Mammary epithelial cell (primary cell): ENCODE measurements at regions of chr12 and their contacts with region 1.

Region 1: DNA sequence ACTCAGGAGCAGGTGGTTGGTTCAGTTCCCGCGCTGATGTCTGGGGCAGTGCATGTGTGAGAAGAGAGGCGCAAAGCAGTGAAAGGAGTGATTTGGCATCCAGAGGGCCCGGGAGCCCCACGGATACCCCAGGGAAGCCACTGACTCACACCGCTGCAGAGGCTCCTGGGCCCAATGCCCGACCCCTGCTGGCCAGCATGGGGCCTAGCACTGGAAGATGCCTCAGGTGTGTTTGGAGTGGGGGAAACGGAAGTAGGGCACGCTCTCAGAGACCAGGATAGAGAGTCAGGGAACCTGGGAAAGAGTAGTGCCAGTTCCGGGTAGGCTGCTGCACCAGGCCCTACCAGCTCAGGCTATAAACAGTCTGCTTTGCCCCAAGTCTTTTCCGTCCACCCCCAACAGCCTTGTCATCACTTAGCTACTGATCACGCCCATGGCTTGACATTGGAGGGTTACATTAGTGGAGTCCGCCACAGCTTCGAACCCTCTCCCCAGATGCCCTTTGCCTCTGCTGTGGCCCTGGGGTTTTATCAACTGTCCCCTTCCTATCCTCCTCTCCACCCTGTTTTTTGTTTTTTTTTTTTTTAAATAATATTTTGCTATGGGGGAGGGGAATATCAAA is 9.5 kb upstream of the CSAD start:
- DNase-seq: peak; percentile 28
- H3K4me3 ChIP-seq: no peak overlapping the region
- H3K27ac ChIP-seq: no peak overlapping the region
- H3K4me1 ChIP-seq: peaks cover 5% of the 10 kb centered on the region
- H3K27me3 ChIP-seq: no peaks in the 10 kb centered on the region
- CTCF ChIP-seq: peak; percentile 89 to 93

Region 2: DNA sequence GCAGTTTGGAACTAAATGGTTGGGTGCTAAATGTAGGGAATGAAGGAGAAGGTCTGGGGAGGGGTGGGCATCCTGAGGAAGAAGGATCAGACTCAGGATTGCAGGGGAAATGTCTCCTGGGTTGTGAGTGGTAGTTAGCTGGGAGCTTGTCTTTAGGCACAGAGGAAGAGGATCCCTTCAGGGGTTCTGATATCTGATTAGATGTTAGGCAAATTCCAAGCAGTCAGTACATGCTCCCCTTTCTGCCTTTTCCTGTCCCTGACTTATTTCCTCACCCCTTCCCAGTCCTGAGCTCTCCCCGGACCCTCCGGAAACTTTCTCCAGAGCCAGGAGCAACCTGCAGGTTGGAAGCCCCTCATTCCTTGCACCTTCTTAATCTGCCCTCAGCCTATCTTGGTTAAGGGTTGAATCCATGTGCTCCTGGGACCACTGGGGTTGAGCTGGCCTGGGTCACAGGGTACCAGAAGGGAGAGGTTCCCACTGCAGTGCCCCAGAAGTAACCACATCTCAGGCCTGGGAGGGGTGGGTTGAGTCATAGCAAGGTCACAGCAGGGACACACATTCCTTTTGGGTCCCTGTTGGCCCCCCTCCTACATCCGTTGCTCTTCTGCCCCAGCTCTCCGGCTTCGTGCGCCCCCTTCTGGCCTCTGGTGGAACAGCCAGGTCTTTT is 91.1 kb before region 1 on chr12:
- CTCF ChIA-PET with region 1: no interaction called
- dilution Hi-C with region 1: loop called (anchors 5 kb)
- in situ Hi-C with region 1: no loop called
- intact Hi-C with region 1: no loop called
- DNase-seq: peak; percentile 86
- H3K4me3 ChIP-seq: peak overlapping the region; percentile 61 to 83 (median 79)
- H3K27ac ChIP-seq: peak overlapping the region; percentile 66
- H3K4me1 ChIP-seq: peaks cover 33% of the 10 kb centered on the region
- H3K27me3 ChIP-seq: no peaks in the 10 kb centered on the region
- CTCF ChIP-seq: peak; percentile 88 to 95

Region 3: DNA sequence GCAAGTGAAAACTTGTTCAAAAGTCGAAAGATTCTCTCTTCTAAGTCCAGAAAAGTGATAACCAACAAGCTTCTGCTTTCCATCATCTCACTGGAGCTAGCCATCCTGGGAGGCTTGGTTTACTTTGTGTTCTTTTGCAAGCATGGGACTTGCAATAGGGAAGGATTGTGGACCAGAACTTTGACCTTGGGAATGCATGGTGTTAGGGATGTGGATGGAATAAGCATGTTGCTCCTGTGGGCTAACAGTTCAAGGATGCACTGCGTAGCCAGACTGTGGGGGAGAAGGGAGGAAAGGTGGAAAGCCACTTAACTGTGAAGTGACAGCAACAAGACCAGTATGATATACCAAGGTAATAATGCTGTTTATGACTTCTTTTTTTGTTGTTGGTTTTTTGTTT is 58.4 kb before region 1 on chr12:
- CTCF ChIA-PET with region 1: no interaction called
- dilution Hi-C with region 1: loop called (anchors 5 kb)
- in situ Hi-C with region 1: no loop called
- intact Hi-C with region 1: no loop called
- DNase-seq: no peak
- H3K4me3 ChIP-seq: no peak overlapping the region
- H3K27ac ChIP-seq: no peak overlapping the region
- H3K4me1 ChIP-seq: no peaks in the 10 kb centered on the region
- H3K27me3 ChIP-seq: no peaks in the 10 kb centered on the region
- CTCF ChIP-seq: no peak

Region 4: GRCh38 chr12:53241623-53242412 is 51.6 kb after region 1 on chr12:
- CTCF ChIA-PET with region 1: no interaction called
- dilution Hi-C with region 1: loop called (anchors 10 kb)
- in situ Hi-C with region 1: no loop called
- intact Hi-C with region 1: no loop called
- DNase-seq: no peak
- H3K4me3 ChIP-seq: no peak overlapping the region
- H3K27ac ChIP-seq: no peak overlapping the region
- H3K4me1 ChIP-seq: peaks cover under 1% of the 10 kb centered on the region
- H3K27me3 ChIP-seq: no peaks in the 10 kb centered on the region
- CTCF ChIP-seq: no peak

Region 5: GRCh38 chr12:53267999-53268647 is 77.9 kb after region 1 on chr12 and contains the start of gene ESPL1:
- CTCF ChIA-PET with region 1: no interaction called
- dilution Hi-C with region 1: loop called (anchors 5 kb)
- in situ Hi-C with region 1: no loop called
- intact Hi-C with region 1: no loop called
- DNase-seq: peak; percentile 83
- H3K4me3 ChIP-seq: peak within 1 kb of the TSS; percentile 88 to 98 (median 96)
- H3K27ac ChIP-seq: peak within 1 kb of the TSS; percentile 91
- H3K4me1 ChIP-seq: peaks cover 18% of the 10 kb centered on the region
- H3K27me3 ChIP-seq: no peaks in the 10 kb centered on the region
- CTCF ChIP-seq: peak; percentile 13 to 15
- total RNA-seq, gene ESPL1: 0.67 to 19.7 TPM

Region 6: DNA sequence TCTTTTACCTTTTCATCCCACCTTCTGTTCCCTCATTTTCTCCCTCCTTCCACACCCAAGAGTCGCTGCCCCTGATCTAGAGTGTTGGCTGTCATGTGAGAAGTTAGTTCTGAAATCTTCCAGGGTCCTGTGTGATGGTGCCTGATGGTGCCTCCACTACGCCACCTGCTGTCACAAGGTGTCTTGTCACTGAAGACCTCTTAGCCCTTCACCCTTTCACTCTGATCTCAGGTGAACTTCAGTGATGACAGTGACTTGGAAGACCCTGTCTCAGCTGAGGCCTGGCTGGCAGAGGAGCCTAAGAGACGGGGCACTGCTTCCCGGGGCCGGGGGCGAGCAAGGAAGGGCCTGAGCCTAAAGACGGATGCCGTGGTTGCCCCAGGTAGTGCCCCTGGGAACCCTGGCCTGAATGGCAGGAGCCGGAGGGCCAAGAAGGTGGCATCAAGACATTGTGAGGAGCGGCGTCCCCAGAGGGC is 97.6 kb after region 1 on chr12:
- CTCF ChIA-PET with region 1: no interaction called
- dilution Hi-C with region 1: loop called (anchors 5 kb)
- in situ Hi-C with region 1: no loop called
- intact Hi-C with region 1: no loop called
- DNase-seq: peak; percentile 43
- H3K4me3 ChIP-seq: no peak overlapping the region
- H3K27ac ChIP-seq: no peak overlapping the region
- H3K4me1 ChIP-seq: no peaks in the 10 kb centered on the region
- H3K27me3 ChIP-seq: no peaks in the 10 kb centered on the region
- CTCF ChIP-seq: peak; percentile 51 to 80